OCI-LY7 (cell line): ENCODE measurements at regions of chr2 and their contacts with region 1.

Region 1: GRCh38 chr2:27628767-27629709 is at the starts of genes CCDC121 and GPN1:
- DNase-seq: peak; percentile 92
- H3K4me3 ChIP-seq: peak within 1 kb of the TSS; percentile 96
- H3K27ac ChIP-seq: peak within 1 kb of the TSS; percentile 81
- H3K4me1 ChIP-seq: peaks cover 32% of the 10 kb centered on the region
- CTCF ChIP-seq: no peak
- total RNA-seq, gene CCDC121: 5.1 and 9.2 TPM in 2 replicates
- total RNA-seq, gene GPN1: 29.5 and 31.1 TPM in 2 replicates

Region 2: DNA sequence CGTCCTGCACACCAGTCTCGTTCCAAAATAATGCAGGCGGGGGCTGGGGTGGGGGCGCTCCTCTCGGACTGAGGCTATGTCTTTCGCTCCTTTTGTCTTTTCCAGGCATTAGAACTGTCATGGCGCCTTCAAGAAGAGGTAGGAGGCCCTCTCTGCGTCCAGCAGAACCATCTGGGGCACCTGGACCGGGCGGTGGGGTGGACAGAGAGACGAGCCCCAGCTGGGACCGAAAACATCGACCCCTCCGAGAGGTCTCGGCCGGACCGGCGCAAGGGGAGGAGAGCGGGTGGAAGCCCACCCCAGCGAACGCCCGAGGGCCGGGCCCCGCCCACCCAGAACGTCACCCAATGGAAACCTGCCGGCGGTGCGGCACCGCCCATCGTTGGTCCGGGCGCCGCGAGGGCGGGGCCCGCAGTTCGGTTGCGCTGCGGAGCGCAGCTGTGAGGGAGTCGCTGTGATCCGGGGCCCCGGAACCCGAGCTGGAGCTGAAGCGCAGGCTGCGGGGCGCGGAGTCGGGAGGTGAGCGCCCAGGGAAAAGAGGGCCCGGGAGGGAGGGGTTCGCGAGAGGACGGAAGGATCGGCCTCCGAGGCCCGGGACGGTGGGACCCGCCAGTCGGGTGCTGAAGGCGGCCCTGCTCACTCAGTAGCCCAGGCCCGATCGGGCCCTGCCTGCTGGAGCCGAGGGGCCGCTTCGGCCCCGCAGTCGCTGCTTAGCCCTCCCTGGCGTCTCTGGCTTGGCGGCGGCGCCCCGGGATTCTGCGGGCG is 200.6 kb before region 1 on chr2 and contains the start of gene NRBP1:
- CTCF ChIA-PET with region 1: no interaction called
- POLR2A ChIA-PET with region 1: no interaction called
- intact Hi-C with region 1: loop called (anchors 2 kb)
- DNase-seq: peak; percentile 96
- H3K4me3 ChIP-seq: peak within 1 kb of the TSS; percentile 86
- H3K27ac ChIP-seq: peak within 1 kb of the TSS; percentile 76
- H3K4me1 ChIP-seq: peaks cover 21% of the 10 kb centered on the region
- CTCF ChIP-seq: peak; percentile 66
- total RNA-seq, gene NRBP1: 27.9 and 28.5 TPM in 2 replicates

Region 3: GRCh38 chr2:27582695-27583389 is 46.2 kb before region 1 on chr2 and contains the start of gene ZNF512:
- CTCF ChIA-PET with region 1: no interaction called
- POLR2A ChIA-PET with region 1: interaction called, 4 read pairs
- intact Hi-C with region 1: loop called (anchors 5 kb)
- DNase-seq: peak; percentile 98
- H3K4me3 ChIP-seq: peak within 1 kb of the TSS; percentile 87
- H3K27ac ChIP-seq: peak within 1 kb of the TSS; percentile 54
- H3K4me1 ChIP-seq: peaks cover 29% of the 10 kb centered on the region
- CTCF ChIP-seq: peak; percentile 41
- total RNA-seq, gene ZNF512: 40.7 and 54.0 TPM in 2 replicates